Kidney (tissue), 22 donors: ENCODE measurements at regions of chr16 and their contacts with region 1.

Region 1: DNA sequence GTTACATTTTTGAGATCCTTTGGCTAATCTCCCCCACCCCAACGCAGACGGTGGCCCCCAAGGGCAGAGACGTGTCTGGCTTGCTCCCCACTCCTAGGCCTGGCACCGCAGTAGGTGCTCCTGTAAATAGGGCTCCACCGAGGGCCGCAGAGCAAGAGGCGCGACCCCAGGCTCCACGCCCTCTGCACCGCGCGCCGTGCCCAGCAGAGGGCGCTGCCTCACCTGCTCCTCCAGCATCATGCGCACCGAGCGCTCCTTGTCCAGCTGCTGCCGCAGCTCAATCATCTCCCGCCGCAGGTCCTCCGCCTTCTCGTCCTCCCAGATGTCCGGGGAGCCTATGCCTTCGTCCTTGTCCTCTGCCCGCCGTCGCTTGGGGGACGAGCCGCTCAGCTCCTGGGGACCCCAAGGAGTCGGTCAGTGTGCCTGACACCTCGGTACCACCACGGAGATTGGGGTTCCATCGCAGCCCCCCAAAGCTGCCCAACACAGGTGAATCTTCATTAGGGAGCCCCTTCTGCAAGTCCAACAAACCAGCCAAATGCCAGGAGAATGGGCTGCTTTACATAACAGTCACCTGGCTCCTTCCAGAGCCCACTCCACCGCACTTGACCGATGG is 11.2 kb downstream of the TFAP4 start:
- DNase-seq: peak in 4 of 5 donors; percentile 48 to 72 (median 54)
- H3K4me3 ChIP-seq: no peak overlapping the region
- H3K27ac ChIP-seq: no peak overlapping the region
- H3K4me1 ChIP-seq: peaks cover 0 to 5% (median 0%) of the 10 kb centered on the region in 3 donors
- H3K27me3 ChIP-seq: no peaks in the 10 kb centered on the region
- CTCF ChIP-seq: peak; percentile 56

Region 2: DNA sequence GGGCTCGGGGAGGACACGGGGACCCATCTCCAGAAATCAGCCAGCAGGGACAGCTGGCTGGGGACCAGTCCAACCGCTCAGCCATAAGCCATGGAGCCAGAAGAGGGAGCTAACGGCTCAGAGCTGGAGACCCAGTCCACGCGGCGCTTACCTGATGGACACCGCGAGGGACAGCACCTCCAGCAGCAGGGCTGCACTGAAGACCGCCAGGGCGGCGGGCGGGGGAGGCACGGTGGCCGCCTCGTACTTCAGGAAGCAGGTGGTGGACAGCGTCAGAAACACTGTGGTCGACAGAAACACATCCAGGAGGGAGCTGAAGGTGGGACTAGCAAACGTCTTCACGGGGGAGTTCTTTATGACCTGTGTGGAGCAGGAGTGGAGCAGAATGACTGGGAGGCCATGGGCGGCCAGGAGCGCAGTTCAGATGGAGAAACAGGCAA is 278.6 kb before region 1 on chr16:
- intact Hi-C with region 1: loop called (anchors 10 kb)
- DNase-seq: peak in 4 of 5 donors; percentile 90 to 93 (median 90)
- H3K4me3 ChIP-seq: no peak overlapping the region
- H3K27ac ChIP-seq: no peak overlapping the region
- H3K4me1 ChIP-seq: no peaks in the 10 kb centered on the region
- H3K27me3 ChIP-seq: no peaks in the 10 kb centered on the region
- CTCF ChIP-seq: peak; percentile 61

Region 3: DNA sequence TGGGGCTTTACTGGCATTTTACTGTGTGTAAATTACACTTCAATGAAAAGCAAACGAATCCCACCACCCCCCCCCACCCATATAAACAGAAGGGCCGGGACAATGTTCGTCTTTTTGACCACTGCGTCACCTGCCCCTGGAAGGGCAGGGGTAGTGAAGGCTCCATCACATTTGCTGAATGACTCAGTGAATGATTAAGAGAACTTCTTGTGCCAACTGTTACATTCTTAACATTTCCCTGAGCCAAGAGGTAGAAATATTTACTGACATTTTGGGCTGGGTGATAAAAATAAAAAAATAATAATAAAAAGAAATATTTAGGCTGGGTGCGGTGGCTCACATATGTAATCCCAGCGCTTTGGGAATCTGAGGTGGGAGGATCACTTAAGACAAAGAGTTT is 318.6 kb after region 1 on chr16:
- intact Hi-C with region 1: no loop called
- DNase-seq: no peak
- H3K4me3 ChIP-seq: no peak overlapping the region
- H3K27ac ChIP-seq: no peak overlapping the region
- H3K4me1 ChIP-seq: no peaks in the 10 kb centered on the region
- H3K27me3 ChIP-seq: no peaks in the 10 kb centered on the region
- CTCF ChIP-seq: no peak